CD4-positive, alpha-beta memory T cell (primary cell): ENCODE measurements at regions of chr19 and their contacts with region 1.

Region 1: DNA sequence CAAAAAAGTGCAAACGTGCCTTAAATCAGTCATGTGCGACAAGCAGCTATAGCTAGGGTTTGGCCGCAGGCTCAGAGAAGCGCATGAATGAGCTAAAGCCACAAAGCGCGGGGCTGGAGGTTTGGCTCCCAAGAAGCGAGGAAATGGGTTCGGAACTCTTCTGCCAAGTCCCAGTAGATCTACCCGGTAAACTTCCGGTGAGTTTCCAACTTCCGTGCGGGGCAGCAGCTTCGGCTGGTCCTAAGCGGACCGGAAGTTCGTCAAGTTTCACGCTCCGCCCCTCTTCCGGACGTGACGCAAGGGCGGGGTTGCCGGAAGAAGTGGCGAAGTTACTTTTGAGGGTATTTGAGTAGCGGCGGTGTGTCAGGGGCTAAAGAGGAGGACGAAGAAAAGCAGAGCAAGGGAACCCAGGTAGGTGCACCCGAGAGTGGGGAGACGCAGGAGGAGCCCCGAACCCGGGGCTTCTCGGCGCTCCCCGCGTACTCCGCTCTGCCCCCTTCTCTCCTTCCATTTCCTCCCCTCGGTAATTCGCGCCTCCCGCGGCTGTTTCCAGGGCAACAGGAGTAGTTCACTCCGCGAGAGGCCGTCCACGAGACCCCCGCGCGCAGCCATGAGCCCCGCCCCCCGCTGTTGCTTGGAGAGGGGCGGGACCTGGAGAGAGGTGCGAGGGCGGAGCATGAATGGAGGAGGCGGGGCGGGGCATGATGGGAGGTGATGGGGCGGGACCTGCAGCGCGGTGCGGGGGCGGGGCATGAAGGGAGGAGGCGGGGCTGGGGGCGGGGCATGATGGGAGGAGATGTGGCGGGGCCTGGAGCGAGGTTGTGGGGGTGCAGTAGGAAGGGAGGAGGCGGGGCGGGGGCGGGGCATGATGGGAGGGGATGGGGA is at the start of gene NR1H2:
- DNase-seq: peak; percentile 95 to 96 (median 96)
- H3K4me3 ChIP-seq: peak within 1 kb of the TSS; percentile 94 to 97
- H3K4me3 Mint-ChIP-seq: peak within 1 kb of the TSS; percentile 87 to 98 (median 96)
- H3K27ac ChIP-seq: peak within 1 kb of the TSS; percentile 100
- H3K27ac Mint-ChIP-seq: peak within 1 kb of the TSS; percentile 94 to 100 (median 100)
- H3K4me1 ChIP-seq: peaks cover 14% of the 10 kb centered on the region
- H3K4me1 Mint-ChIP-seq: peaks cover 7 to 26% (median 14%) of the 10 kb centered on the region in 4 donors
- H3K27me3 ChIP-seq: no peaks in the 10 kb centered on the region
- H3K27me3 Mint-ChIP-seq: no peaks in the 10 kb centered on the region
- total RNA-seq, gene NR1H2: 103 to 109 TPM

Region 2: GRCh38 chr19:50402544-50403301 is 26.3 kb after region 1 on chr19:
- CTCF ChIA-PET with region 1: no interaction called
- POLR2A ChIA-PET with region 1: no interaction called
- intact Hi-C with region 1: no loop called
- DNase-seq: no peak
- H3K4me3 ChIP-seq: no peak overlapping the region
- H3K4me3 Mint-ChIP-seq: no peak overlapping the region
- H3K27ac ChIP-seq: no peak overlapping the region
- H3K27ac Mint-ChIP-seq: no peak overlapping the region
- H3K4me1 ChIP-seq: no peaks in the 10 kb centered on the region
- H3K4me1 Mint-ChIP-seq: peaks cover 0 to 4% (median 1%) of the 10 kb centered on the region in 4 donors
- H3K27me3 ChIP-seq: no peaks in the 10 kb centered on the region
- H3K27me3 Mint-ChIP-seq: no peaks in the 10 kb centered on the region

Region 3: GRCh38 chr19:50476224-50476942 is 100.0 kb after region 1 on chr19 and contains the starts of genes EMC10 and GARIN5A:
- CTCF ChIA-PET with region 1: no interaction called
- POLR2A ChIA-PET with region 1: no interaction called
- intact Hi-C with region 1: loop called (anchors 1 kb)
- DNase-seq: peak; percentile 94 to 96 (median 95)
- H3K4me3 ChIP-seq: peak within 1 kb of the TSS; percentile 66 to 85
- H3K4me3 Mint-ChIP-seq: peak within 1 kb of the TSS; percentile 95 to 99 (median 98)
- H3K27ac ChIP-seq: peak within 1 kb of the TSS; percentile 89
- H3K27ac Mint-ChIP-seq: peak within 1 kb of the TSS; percentile 94 to 98 (median 97)
- H3K4me1 ChIP-seq: peaks cover 25% of the 10 kb centered on the region
- H3K4me1 Mint-ChIP-seq: peaks cover 13 to 33% (median 24%) of the 10 kb centered on the region in 4 donors
- H3K27me3 ChIP-seq: no peaks in the 10 kb centered on the region
- H3K27me3 Mint-ChIP-seq: no peaks in the 10 kb centered on the region
- total RNA-seq, gene EMC10: 83.7 to 92.6 TPM
- total RNA-seq, gene GARIN5A: 0.61 TPM in 1 of 2 experiments, not detected in the other